RWPE1 (cell line): ENCODE measurements at regions of chr6 and their contacts with region 1.

Region 1: DNA sequence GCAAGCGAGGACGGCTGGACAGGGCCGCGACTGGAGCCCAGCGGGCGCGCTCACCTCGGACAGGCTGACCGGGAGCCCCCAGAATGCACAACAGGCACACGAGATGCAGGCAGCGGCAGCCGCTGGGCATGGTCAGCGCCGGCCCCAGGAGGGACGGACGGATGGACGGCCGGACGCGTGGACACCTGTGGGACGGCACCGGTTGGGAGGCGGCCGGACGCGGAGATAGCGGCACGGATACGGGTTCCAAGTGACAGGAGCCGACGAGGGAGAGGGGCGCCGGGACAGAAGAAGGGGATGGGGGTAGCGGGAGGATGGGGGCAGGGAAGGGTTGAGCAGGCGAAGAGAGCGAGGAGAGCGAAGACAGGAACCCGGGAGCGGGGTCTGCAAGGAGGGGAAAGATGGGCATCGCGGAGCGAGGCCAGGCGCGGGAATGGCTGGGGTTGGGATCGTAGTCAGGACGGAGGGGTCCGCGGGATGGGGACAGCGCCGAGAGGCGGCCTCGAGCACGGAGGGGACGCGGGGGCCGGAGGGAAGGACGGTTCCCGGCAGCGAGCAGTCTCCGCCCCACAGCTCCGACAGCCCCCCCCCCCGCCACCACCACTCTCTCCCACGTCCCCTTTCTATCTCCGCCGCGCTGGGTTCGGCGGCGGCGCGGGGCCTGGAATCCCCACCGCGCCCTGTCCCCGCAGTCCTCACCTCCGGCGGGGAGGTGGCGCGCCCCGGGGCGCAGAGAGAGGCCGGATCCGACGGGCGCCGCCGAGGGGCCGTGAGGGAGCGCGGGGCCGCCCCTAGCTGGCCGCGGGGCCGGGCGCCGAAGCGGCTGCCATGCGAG is 435 bp downstream of the DLK2 start:
- DNase-seq: peak; percentile 50
- H3K27ac ChIP-seq: peak overlapping the region; percentile 90
- CTCF ChIP-seq: peak; percentile 57; the same call in 1 of the 2 replicates

Region 2: DNA sequence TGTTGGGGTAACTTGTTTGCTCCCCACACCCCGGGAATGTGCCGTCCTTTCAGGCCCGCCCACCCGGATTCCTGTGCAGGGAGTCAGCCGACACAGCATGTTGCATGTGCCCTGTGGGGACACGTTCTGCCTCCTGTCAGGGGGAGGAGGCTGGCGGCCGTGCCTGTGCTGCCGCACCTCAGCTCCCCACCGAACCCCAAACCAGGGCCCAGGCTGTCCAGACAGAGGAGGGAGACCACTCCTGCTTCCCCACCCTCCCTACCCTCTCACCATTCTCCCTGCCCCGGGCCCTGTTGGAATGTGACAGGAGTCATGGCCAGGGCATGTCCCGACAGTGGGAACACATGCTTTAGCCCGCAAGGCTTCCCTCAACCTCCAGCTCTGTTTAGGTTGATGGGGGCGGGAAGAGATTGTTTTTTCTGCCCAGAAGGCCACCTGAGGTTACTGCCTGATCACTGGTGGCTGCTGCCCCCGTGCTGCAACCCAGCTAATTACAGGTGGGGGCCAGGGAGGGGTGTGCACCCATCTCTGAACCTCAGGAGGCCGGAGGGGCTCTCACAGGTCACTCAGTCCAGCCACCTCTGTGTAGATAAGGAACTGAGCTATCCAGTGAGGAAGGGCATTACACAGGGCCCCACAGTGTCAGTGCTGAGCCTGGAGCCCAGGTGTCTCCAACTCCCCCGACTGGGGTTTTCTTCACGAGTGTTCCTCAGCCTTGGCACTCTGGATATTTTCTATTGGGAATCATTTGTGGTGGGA is 41.6 kb after region 1 on chr6:
- CTCF ChIA-PET with region 1: interaction called, 14 read pairs
- POLR2A ChIA-PET with region 1: no interaction called
- DNase-seq: peak; percentile 93
- H3K27ac ChIP-seq: peak overlapping the region; percentile 99
- CTCF ChIP-seq: peak; percentile 90